Right lobe of liver (tissue), 6 donors: ENCODE measurements at regions of chr3 and their contacts with region 1.

Region 1: DNA sequence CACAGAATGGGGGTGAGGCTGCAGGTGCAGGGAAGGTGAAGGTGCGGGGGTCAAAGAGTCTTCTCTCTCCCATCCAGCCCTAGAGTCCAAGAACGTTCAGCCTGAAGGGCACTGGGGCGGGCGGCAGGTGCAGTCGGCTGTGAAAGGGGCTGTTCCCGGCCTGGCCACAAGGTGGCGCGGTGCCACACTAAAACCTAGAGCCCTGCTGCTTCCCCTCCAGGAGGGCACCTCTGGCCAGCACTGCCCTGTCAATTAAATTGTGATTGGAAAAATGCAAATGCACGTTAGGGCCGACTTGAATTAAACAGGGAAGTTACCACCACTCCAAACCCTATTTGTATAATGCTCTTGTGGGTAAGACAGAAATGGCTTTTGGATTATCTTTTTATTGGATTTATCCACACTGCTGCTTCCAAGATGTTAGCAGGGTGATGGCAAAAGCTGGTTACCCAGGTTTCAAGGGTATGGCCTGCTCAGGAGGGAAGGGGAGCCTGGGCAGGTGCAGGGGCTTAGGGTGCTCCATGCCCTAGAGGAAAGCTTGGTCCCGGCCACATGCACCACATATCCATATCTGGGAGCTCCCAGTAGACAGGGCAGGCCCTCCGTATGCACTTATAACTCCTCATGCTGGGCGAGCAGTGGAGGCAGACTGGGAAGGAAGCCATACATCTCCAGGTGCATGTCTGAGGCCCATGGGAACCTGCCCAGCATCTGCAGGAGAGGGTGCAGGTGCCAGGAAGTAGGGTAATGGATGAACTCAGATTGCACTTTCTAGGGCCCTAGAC is 119.8 kb downstream of the ADCY5 start:
- DNase-seq: peak; percentile 80 to 86 (median 84)
- ATAC-seq: peak; percentile 88 to 93 (median 90)
- H3K4me3 ChIP-seq: no peak overlapping the region
- H3K27ac ChIP-seq: no peak overlapping the region
- H3K4me1 ChIP-seq: peaks cover 0 to 19% (median 5%) of the 10 kb centered on the region in 4 donors
- H3K27me3 ChIP-seq: no peaks in the 10 kb centered on the region
- CTCF ChIP-seq: peak; percentile 94 to 96 (median 95)
- POLR2A ChIP-seq: no peak

Region 2: DNA sequence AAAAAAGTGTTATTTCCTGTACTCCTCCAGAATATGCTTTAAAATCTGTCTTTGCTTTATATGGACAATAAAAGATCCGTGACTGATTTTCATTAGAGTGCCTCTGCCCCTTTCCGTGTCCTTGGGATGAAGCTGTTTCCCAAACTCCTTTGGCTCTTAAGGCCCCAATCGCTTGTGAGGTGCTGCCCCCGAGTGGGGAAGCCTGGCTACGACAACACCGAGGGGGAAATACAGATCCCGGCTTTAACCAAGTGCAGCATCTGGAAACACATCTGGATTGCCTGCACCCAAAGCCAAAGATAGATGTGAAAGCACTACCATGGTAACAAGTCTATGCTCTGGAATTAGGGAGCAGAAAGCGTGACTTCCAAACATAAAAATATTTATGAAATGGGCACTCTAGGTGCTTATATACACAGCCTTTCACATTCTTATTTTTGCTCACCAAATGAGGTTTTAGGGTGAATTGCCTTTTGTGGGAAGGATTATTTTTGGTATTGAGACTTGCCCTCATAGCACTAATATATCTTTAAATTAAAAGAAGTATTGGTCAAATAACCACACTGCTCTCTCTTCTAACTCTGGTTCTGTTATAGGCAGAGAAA is 160.5 kb after region 1 on chr3:
- intact Hi-C with region 1: loop called (anchors 5 kb)
- DNase-seq: peak; percentile 57 to 67 (median 62)
- ATAC-seq: peak; percentile 89 to 94 (median 91)
- H3K4me3 ChIP-seq: no peak overlapping the region
- H3K27ac ChIP-seq: no peak overlapping the region
- H3K4me1 ChIP-seq: no peaks in the 10 kb centered on the region
- H3K27me3 ChIP-seq: no peaks in the 10 kb centered on the region
- CTCF ChIP-seq: peak; percentile 74 to 88 (median 86)
- POLR2A ChIP-seq: no peak

Region 3: GRCh38 chr3:123552095-123552714 is 223.2 kb after region 1 on chr3:
- intact Hi-C with region 1: loop called (anchors 5 kb)
- DNase-seq: no peak
- ATAC-seq: peak; percentile 50 to 84 (median 61)
- H3K4me3 ChIP-seq: no peak overlapping the region
- H3K27ac ChIP-seq: no peak overlapping the region
- H3K4me1 ChIP-seq: no peaks in the 10 kb centered on the region
- H3K27me3 ChIP-seq: no peaks in the 10 kb centered on the region
- CTCF ChIP-seq: peak; percentile 47 to 63 (median 63)
- POLR2A ChIP-seq: no peak

Region 4: DNA sequence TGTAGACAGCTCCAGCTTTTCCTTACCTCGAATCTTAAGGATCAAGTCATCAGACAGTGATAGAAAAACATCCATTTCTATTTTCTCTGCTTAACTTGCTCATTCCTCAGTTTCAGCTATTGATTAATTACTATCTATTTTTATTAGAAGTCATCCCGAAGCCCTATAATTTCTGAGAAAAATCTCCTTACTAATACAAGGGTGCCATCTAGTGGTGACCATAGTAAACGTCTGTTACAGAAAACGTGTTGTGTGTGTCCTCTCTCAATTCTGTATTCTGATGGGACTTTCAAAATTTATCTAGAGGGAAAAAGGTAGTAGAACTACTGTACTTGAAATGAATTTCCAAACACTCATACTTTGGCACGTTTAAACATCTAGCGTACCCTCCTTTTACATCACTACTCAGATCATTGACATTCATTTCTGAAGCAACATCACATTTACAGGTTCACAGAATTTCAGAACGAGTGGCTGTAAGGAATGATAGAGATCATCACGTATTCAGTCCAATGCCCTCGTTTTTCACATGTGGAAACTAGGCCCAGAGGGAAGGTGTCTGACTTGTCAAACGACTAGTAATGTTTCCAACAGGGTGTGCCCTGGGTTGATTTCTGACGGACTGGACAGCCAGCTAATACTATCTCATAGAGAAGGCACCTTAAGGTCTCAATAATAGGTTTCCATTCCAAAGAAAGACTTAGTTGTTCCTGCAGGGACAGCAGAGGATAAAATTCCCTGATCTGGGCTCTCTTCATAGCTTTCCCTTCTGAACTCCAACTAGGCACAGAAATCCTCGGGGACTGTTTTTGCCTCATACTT is 230.2 kb after region 1 on chr3:
- intact Hi-C with region 1: loop called (anchors 5 kb)
- DNase-seq: no peak
- ATAC-seq: peak; percentile 76 to 85 (median 82)
- H3K4me3 ChIP-seq: no peak overlapping the region
- H3K27ac ChIP-seq: no peak overlapping the region
- H3K4me1 ChIP-seq: no peaks in the 10 kb centered on the region
- H3K27me3 ChIP-seq: no peaks in the 10 kb centered on the region
- CTCF ChIP-seq: peak; percentile 73 to 89 (median 84)
- POLR2A ChIP-seq: no peak